AG04450 (cell line): ENCODE measurements at regions of chr3 and their contacts with region 1.

Region 1: DNA sequence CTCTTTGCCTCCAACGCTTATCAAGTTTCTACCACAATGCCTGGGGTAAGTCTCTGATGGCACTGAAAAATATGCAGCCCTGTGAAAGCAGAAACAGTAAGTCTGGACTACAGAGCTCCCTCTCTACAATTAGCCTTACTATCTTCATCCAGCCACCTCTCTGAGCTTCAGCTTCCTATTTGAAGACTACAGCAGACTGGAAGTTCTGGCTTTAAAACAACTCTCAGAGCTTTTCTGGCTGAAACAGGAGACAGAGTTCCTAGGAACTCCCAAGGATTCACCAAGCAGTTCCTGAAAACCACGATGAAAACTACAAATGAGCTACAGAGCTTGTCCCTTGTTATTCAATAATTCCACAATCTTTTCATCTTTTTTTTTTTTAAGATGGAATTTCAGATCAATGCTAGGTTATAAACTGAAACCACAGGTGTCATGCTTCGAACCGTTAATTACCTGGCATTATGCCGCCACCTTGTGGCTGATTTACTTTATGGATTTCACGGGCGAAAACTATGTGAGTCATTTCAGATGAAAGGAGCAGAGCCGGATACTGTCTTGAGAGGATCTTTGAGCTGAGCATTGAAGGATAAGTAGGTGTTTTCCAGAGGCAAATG is 3.9 kb downstream of the CRYGS start:
- DNase-seq: peak; percentile 29
- H3K4me3 ChIP-seq: no peak overlapping the region
- H3K27ac ChIP-seq: no peak overlapping the region
- H3K27me3 ChIP-seq: no peaks in the 10 kb centered on the region
- CTCF ChIP-seq: peak; percentile 69

Region 2: GRCh38 chr3:185983495-185984141 is 556.7 kb before region 1 on chr3:
- CTCF ChIA-PET with region 1: interaction called, 61 read pairs
- POLR2A ChIA-PET with region 1: no interaction called
- DNase-seq: peak; percentile 45
- H3K4me3 ChIP-seq: no peak overlapping the region
- H3K27ac ChIP-seq: no peak overlapping the region
- H3K27me3 ChIP-seq: no peaks in the 10 kb centered on the region
- CTCF ChIP-seq: peak; percentile 92

Region 3: GRCh38 chr3:186083746-186084145 is 456.6 kb before region 1 on chr3:
- CTCF ChIA-PET with region 1: interaction called, 13 read pairs
- POLR2A ChIA-PET with region 1: interaction called, 4 read pairs
- DNase-seq: no peak
- H3K4me3 ChIP-seq: no peak overlapping the region
- H3K27ac ChIP-seq: no peak overlapping the region
- H3K27me3 ChIP-seq: no peaks in the 10 kb centered on the region
- CTCF ChIP-seq: no peak

Region 4: GRCh38 chr3:186239321-186239720 is 301.0 kb before region 1 on chr3:
- CTCF ChIA-PET with region 1: interaction called, 11 read pairs
- POLR2A ChIA-PET with region 1: interaction called, 3 read pairs
- DNase-seq: no peak
- H3K4me3 ChIP-seq: no peak overlapping the region
- H3K27ac ChIP-seq: no peak overlapping the region
- H3K27me3 ChIP-seq: peaks cover 7% of the 10 kb centered on the region
- CTCF ChIP-seq: no peak

Region 5: GRCh38 chr3:186268616-186269448 is 271.5 kb before region 1 on chr3:
- CTCF ChIA-PET with region 1: interaction called, 15 read pairs
- POLR2A ChIA-PET with region 1: no interaction called
- DNase-seq: no peak
- H3K4me3 ChIP-seq: no peak overlapping the region
- H3K27ac ChIP-seq: no peak overlapping the region
- H3K27me3 ChIP-seq: peaks cover 22% of the 10 kb centered on the region
- CTCF ChIP-seq: peak; percentile 52

Region 6: GRCh38 chr3:186451371-186451770 is 89.0 kb before region 1 on chr3:
- CTCF ChIA-PET with region 1: no interaction called
- POLR2A ChIA-PET with region 1: no interaction called
- DNase-seq: no peak
- H3K4me3 ChIP-seq: no peak overlapping the region
- H3K27ac ChIP-seq: no peak overlapping the region
- H3K27me3 ChIP-seq: peaks cover 7% of the 10 kb centered on the region
- CTCF ChIP-seq: no peak

Region 7: GRCh38 chr3:186551387-186551786 is 11.1 kb after region 1 on chr3:
- CTCF ChIA-PET with region 1: interaction called, 33 read pairs
- POLR2A ChIA-PET with region 1: no interaction called
- DNase-seq: no peak
- H3K4me3 ChIP-seq: no peak overlapping the region
- H3K27ac ChIP-seq: no peak overlapping the region
- H3K27me3 ChIP-seq: no peaks in the 10 kb centered on the region
- CTCF ChIP-seq: no peak